ENCODE measurements at regions of chr15 and their contacts with region 1.

Region 1: DNA sequence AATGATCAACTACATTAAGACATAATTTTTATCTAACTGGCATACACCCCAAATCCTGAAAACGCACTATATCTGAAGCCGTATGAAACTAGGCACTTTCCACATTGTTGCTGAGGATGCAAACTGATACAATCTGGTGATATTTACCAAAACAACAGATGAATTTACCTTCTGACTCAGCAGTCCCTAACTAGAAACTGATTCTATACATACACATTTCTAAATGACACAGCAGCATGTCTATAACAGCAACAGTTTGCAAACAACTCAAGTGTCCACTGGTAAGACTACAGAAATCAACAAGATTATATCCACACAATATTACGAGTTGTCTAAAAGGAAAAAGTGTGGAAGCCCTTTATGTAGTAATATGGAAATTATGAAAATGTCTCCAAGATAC is 22.9 kb downstream of the SECISBP2L start:
- DNase-seq: no peak
- H3K4me3 ChIP-seq: no peak overlapping the region
- H3K27ac ChIP-seq: no peak overlapping the region
- H3K4me1 ChIP-seq: no peaks in the 10 kb centered on the region
- H3K27me3 ChIP-seq: no peaks in the 10 kb centered on the region
- CTCF ChIP-seq: no peak
- POLR2A ChIP-seq: no peak

Region 2: GRCh38 chr15:49242820-49243219 is 219.5 kb after region 1 on chr15:
- intact Hi-C with region 1: no loop called
- DNase-seq: peak in 1 of 2 donors; percentile 24
- H3K4me3 ChIP-seq: no peak overlapping the region
- H3K27ac ChIP-seq: peak overlapping the region in 1 of 2 donors; percentile 31
- H3K4me1 ChIP-seq: peaks cover 0 to 5% of the 10 kb centered on the region in 2 donors
- H3K27me3 ChIP-seq: no peaks in the 10 kb centered on the region
- CTCF ChIP-seq: no peak
- POLR2A ChIP-seq: no peak

Region 3: DNA sequence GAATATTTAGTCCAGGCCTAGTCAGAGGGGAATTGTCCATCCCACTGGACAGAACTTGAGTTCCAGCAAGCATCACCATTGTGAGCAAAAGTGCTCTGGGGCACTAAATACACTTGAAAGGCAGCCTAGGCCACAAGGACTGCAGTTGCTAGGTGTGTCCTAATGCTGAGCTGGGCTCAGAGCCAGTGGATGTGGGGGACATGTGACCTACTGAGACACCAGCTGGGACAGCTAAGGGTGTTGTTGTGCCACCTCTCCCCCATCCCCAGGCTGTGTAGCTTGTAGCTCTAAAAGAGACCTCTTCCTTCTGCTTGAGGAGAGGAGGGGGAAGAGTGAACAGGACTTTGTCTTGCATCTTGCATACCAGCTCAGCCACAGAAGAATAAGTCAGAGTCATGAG is 718.4 kb after region 1 on chr15:
- intact Hi-C with region 1: no loop called
- DNase-seq: no peak
- H3K4me3 ChIP-seq: no peak overlapping the region
- H3K27ac ChIP-seq: no peak overlapping the region
- H3K4me1 ChIP-seq: no peaks in the 10 kb centered on the region
- H3K27me3 ChIP-seq: no peaks in the 10 kb centered on the region
- CTCF ChIP-seq: no peak
- POLR2A ChIP-seq: no peak

Region 4: DNA sequence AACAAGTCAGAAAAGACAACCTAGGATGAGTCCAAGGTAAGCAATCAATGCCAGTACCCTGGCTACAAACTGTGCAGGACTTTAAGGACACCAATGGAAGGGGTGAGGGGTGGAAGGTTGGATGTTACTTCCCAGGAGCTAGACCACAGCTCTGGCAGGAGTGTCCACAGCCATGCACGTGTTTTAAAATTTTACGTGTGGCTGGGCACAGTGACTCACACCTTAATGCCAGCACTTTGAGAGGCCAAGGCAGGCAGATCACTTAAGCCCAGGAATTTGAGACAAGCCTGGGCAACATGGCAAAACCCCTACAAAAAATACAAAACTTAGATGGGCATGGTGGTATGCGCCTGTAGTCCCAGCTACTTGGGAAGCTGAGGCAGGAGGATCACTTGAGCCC is 1256.9 kb after region 1 on chr15:
- intact Hi-C with region 1: loop called (anchors 10 kb)
- DNase-seq: no peak
- H3K4me3 ChIP-seq: no peak overlapping the region
- H3K27ac ChIP-seq: no peak overlapping the region
- H3K4me1 ChIP-seq: no peaks in the 10 kb centered on the region
- H3K27me3 ChIP-seq: no peaks in the 10 kb centered on the region
- CTCF ChIP-seq: no peak
- POLR2A ChIP-seq: no peak